Posterior vena cava (tissue), 2 donors: ENCODE measurements at regions of chr14 and their contacts with region 1.

Region 1: DNA sequence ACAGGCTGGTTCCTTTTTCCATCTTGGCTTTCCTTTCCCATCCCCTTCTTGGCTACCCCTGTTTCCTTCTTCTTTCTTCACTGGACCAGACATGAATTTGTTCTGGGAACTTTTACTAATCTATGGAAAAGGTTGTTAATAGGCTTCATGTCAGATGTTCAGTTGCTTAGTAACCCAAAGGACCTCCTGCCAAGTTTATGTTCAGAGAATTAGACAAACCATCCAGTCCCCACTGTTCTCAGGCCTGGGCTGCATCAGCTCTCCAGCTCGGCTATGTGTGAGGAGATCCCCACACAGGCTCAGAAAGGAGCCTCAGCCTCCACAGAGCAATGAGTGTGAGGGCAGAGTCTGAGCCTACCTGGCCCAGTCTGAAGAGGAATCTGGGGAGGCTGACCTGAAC is 78.0 kb downstream of the AKAP6 start:
- DNase-seq: no peak

Region 2: GRCh38 chr14:32197922-32198321 is 209.2 kb before region 1 on chr14:
- intact Hi-C with region 1: no loop called
- DNase-seq: no peak

Region 3: GRCh38 chr14:32331206-32331605 is 75.9 kb before region 1 on chr14:
- intact Hi-C with region 1: loop called in 1 of 2 experiments (anchors 2 kb)
- DNase-seq: no peak

Region 4: GRCh38 chr14:32417956-32418552 is 10.9 kb after region 1 on chr14:
- intact Hi-C with region 1: no loop called
- DNase-seq: no peak

Region 5: GRCh38 chr14:32443890-32444661 is 36.9 kb after region 1 on chr14:
- intact Hi-C with region 1: no loop called
- DNase-seq: no peak

Region 6: GRCh38 chr14:32469388-32470160 is 62.4 kb after region 1 on chr14:
- intact Hi-C with region 1: no loop called
- DNase-seq: no peak